Dendritic cell treated with granulocyte-macrophage colony-stimulating factor and Interleukin-4, amounts not matched to agents 40 ng/mL and 50 ng/mL, for 4 days (primary cell): ENCODE measurements at regions of chr6 and their contacts with region 1.

Region 1: DNA sequence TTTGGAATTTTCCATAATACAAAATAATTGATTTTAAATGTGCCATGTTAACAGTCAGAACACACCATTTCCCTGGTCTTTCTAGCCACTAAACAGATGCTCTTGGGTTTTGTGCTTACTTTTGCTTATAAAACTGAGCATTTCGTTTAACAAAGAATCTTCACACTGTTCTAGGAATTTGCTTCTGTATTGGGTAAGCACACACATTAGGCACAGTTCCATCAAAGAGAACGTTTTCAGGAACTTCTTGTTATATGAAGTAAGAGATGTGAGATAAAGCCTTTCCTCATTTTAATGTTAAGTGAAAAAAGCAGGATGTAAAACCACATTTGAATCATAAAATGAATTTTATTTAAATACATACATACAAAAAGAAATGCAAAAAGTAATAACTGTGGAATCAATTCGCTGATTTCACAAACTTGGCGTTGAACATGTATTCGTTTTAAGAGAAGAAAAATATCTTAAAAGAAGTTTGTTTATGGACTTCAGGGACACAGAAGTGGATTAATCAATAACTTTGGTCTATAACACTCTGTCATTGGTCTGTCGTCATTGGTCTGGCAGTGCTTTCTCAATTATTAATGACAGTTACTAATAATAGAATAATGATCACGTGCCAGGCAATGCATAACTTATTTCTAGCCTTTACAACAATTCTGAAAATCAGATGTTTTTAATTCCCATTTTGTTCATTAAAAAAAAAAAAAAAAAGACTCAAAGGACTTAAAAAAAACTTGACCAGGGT is 199.9 kb upstream of the PRDM1 start:
- H3K4me3 Mint-ChIP-seq: no peak overlapping the region
- H3K27ac Mint-ChIP-seq: peak overlapping the region; percentile 91
- H3K4me1 Mint-ChIP-seq: peaks cover 80% of the 10 kb centered on the region
- H3K27me3 Mint-ChIP-seq: no peaks in the 10 kb centered on the region

Region 2: GRCh38 chr6:105705608-105706007 is 180.6 kb before region 1 on chr6:
- intact Hi-C with region 1: no loop called
- H3K4me3 Mint-ChIP-seq: no peak overlapping the region
- H3K27ac Mint-ChIP-seq: no peak overlapping the region
- H3K4me1 Mint-ChIP-seq: no peaks in the 10 kb centered on the region
- H3K27me3 Mint-ChIP-seq: peaks cover 2% of the 10 kb centered on the region

Region 3: GRCh38 chr6:105780146-105780860 is 105.9 kb before region 1 on chr6:
- intact Hi-C with region 1: no loop called
- H3K4me3 Mint-ChIP-seq: no peak overlapping the region
- H3K27ac Mint-ChIP-seq: no peak overlapping the region
- H3K4me1 Mint-ChIP-seq: peaks cover 23% of the 10 kb centered on the region
- H3K27me3 Mint-ChIP-seq: no peaks in the 10 kb centered on the region

Region 4: GRCh38 chr6:105900125-105900937 is 14.1 kb after region 1 on chr6:
- intact Hi-C with region 1: loop called (anchors 2 kb)
- H3K4me3 Mint-ChIP-seq: peak overlapping the region; percentile 6
- H3K27ac Mint-ChIP-seq: peak overlapping the region; percentile 81
- H3K4me1 Mint-ChIP-seq: peaks cover 27% of the 10 kb centered on the region
- H3K27me3 Mint-ChIP-seq: no peaks in the 10 kb centered on the region